A673 (cell line): ENCODE measurements at regions of chr18 and their contacts with region 1.

Region 1: GRCh38 chr18:45169610-45170009 is 445.7 kb upstream of the SLC14A2 start:
- DNase-seq: peak; percentile 63
- H3K4me3 ChIP-seq: no peak overlapping the region
- H3K27ac ChIP-seq: no peak overlapping the region
- H3K4me1 ChIP-seq: no peaks in the 10 kb centered on the region
- H3K27me3 ChIP-seq: no peaks in the 10 kb centered on the region
- CTCF ChIP-seq: no peak

Region 2: GRCh38 chr18:45221363-45221762 is 51.8 kb after region 1 on chr18:
- CTCF ChIA-PET with region 1: no interaction called
- POLR2A ChIA-PET with region 1: no interaction called
- intact Hi-C with region 1: loop called (anchors 10 kb)
- DNase-seq: no peak
- H3K4me3 ChIP-seq: no peak overlapping the region
- H3K27ac ChIP-seq: no peak overlapping the region
- H3K4me1 ChIP-seq: no peaks in the 10 kb centered on the region
- H3K27me3 ChIP-seq: no peaks in the 10 kb centered on the region
- CTCF ChIP-seq: no peak